Transverse colon (tissue), 4 donors: ENCODE measurements at regions of chr7 and their contacts with region 1.

Region 1: GRCh38 chr7:96061844-96062243 is 260.1 kb downstream of the SLC25A13 start:
- DNase-seq: no peak
- H3K4me3 ChIP-seq: no peak overlapping the region
- H3K27ac ChIP-seq: no peak overlapping the region
- H3K4me1 ChIP-seq: no peaks in the 10 kb centered on the region
- H3K27me3 ChIP-seq: no peaks in the 10 kb centered on the region
- CTCF ChIP-seq: no peak
- EP300 ChIP-seq: no peak
- POLR2A ChIP-seq: no peak

Region 2: GRCh38 chr7:96169439-96169838 is 107.6 kb after region 1 on chr7:
- in situ Hi-C with region 1: loop called in 1 of 4 experiments (anchors 25 kb)
- intact Hi-C with region 1: no loop called
- DNase-seq: no peak
- H3K4me3 ChIP-seq: no peak overlapping the region
- H3K27ac ChIP-seq: no peak overlapping the region
- H3K4me1 ChIP-seq: no peaks in the 10 kb centered on the region
- H3K27me3 ChIP-seq: no peaks in the 10 kb centered on the region
- CTCF ChIP-seq: no peak
- EP300 ChIP-seq: no peak
- POLR2A ChIP-seq: no peak

Region 3: DNA sequence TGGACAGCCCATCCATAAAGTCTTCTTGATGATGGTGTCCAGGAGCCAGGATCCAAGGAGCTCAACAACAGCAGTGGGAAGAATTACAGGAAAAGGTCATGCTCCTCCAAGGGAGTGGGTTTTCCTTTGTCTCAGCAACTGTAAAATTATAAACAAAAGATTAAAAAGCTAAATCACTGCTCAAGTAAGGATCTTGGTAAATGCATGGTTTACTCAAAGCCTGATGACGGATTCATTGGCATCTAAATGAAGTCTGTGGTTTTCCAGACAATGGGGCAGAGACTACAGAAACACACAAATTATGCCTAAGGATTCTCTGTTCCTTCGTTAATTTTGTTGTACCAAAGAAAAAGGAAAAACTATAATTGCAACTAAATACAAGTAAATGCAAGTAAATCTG is 907.1 kb after region 1 on chr7:
- in situ Hi-C with region 1: no loop called
- intact Hi-C with region 1: no loop called
- DNase-seq: no peak
- H3K4me3 ChIP-seq: no peak overlapping the region
- H3K27ac ChIP-seq: no peak overlapping the region
- H3K4me1 ChIP-seq: no peaks in the 10 kb centered on the region
- H3K27me3 ChIP-seq: no peaks in the 10 kb centered on the region
- CTCF ChIP-seq: no peak
- EP300 ChIP-seq: no peak
- POLR2A ChIP-seq: no peak